WTC11 (cell line): ENCODE measurements at regions of chr10 and their contacts with region 1.

Region 1: GRCh38 chr10:69408318-69409175 is 8.2 kb downstream of the TACR2 start:
- DNase-seq: peak; percentile 94
- ATAC-seq: peak; percentile 71
- H3K4me3 Mint-ChIP-seq: peak overlapping the region; percentile 49
- H3K27ac Mint-ChIP-seq: peak overlapping the region; percentile 72; the same call in 1 of the 2 replicates
- H3K4me1 Mint-ChIP-seq: peaks cover 42% of the 10 kb centered on the region
- H3K27me3 Mint-ChIP-seq: peaks cover 7% of the 10 kb centered on the region
- CTCF ChIP-seq: peak; percentile 62

Region 2: GRCh38 chr10:69232252-69232651 is 176.3 kb before region 1 on chr10:
- CTCF ChIA-PET with region 1: interaction called, 13 read pairs
- POLR2A ChIA-PET with region 1: interaction called, 3 read pairs
- DNase-seq: no peak
- ATAC-seq: peak; percentile 75
- H3K4me3 Mint-ChIP-seq: no peak overlapping the region
- H3K27ac Mint-ChIP-seq: no peak overlapping the region
- H3K4me1 Mint-ChIP-seq: peaks cover 13% of the 10 kb centered on the region
- H3K27me3 Mint-ChIP-seq: no peaks in the 10 kb centered on the region
- CTCF ChIP-seq: no peak

Region 3: DNA sequence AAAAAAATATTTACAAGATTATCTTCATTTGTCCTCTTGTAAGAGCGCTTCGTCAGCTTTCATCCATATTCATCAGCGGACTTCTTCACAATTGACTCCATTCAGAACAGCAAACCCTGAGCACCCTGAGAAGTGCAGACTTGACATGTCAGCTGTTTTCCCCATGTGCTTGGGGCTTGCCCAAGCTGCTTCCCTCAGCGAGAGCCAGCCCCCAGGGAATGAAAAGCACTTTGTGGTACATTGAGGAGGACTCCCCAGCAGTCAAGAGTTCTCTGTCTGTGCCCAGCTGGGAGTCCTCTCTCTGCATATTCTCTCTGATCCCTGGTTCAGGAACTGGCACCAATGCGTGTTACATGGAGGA is 165.7 kb before region 1 on chr10:
- CTCF ChIA-PET with region 1: interaction called, 18 read pairs
- POLR2A ChIA-PET with region 1: interaction called, 4 read pairs
- DNase-seq: no peak
- ATAC-seq: no peak
- H3K4me3 Mint-ChIP-seq: no peak overlapping the region
- H3K27ac Mint-ChIP-seq: no peak overlapping the region
- H3K4me1 Mint-ChIP-seq: peaks cover 21% of the 10 kb centered on the region
- H3K27me3 Mint-ChIP-seq: no peaks in the 10 kb centered on the region
- CTCF ChIP-seq: no peak

Region 4: GRCh38 chr10:69451209-69451783 is 42.7 kb after region 1 on chr10 and contains the start of gene TSPAN15:
- CTCF ChIA-PET with region 1: interaction called, 47 read pairs
- POLR2A ChIA-PET with region 1: no interaction called
- DNase-seq: peak; percentile 95
- ATAC-seq: peak; percentile 92
- H3K4me3 Mint-ChIP-seq: peak within 1 kb of the TSS; percentile 77
- H3K27ac Mint-ChIP-seq: no peak within 1 kb of the TSS
- H3K4me1 Mint-ChIP-seq: peaks cover 19% of the 10 kb centered on the region
- H3K27me3 Mint-ChIP-seq: peaks cover 70% of the 10 kb centered on the region
- CTCF ChIP-seq: no peak
- total RNA-seq, gene TSPAN15: 8.3 to 10.4 TPM (median 10.1 TPM) in 3 replicates

Region 5: GRCh38 chr10:69506834-69507721 is 98.5 kb after region 1 on chr10:
- CTCF ChIA-PET with region 1: interaction called, 40 read pairs
- POLR2A ChIA-PET with region 1: no interaction called
- DNase-seq: peak; percentile 28
- ATAC-seq: peak; percentile 9; the same call in 1 of the 2 replicates
- H3K4me3 Mint-ChIP-seq: peak overlapping the region; percentile 31; the same call in 1 of the 2 replicates
- H3K27ac Mint-ChIP-seq: peak overlapping the region; percentile 43; the same call in 1 of the 2 replicates
- H3K4me1 Mint-ChIP-seq: peaks cover 16% of the 10 kb centered on the region
- H3K27me3 Mint-ChIP-seq: no peaks in the 10 kb centered on the region
- CTCF ChIP-seq: no peak